ENCODE measurements at regions of chr17 and their contacts with region 1.

Region 1: DNA sequence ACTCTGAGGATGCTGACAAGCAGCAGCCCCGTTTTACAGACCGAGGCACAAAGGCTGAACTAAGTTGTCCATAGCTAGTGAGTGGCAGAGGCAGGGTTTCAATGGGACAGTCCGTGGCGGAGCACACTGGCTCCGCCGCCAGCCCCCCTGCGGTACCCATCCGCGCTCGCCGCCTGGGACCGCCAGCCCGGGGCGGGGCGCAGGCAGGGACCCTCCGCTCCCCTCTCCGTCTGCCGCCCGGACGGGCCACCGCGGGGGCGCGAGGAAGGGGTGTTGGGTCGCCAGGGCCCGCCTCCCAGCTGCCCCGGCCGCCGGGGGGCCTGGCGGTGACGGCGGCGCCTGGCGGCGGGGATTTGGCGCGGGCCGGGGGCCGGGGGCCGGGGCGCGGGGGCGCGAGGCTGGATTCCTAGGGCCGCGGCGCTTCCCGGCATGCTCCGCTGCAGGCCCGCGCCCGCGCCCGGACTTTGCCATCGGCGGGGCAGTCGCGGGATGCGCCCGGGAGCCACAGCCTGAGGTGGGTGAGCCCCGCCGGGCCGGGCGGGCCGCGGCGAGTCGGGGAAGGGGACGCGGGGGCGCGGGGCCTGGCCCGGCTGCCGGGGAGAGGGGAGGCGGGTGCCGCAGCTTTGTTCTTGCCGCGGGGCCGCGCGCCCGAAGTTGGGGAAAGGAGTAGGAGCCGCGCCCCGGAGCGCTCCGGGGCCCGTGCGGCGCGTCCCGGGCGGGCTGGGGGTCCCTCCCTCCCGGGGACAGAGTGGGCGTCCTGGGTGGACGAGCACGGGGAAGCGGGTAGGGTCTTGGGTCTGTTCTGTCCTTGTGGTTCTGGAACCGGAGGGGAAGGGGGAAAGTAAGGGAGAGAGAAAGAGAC is at the start of gene TMEM98:
- DNase-seq: peak in 9 of 10 donors; percentile 47 to 94 (median 59)

Region 2: DNA sequence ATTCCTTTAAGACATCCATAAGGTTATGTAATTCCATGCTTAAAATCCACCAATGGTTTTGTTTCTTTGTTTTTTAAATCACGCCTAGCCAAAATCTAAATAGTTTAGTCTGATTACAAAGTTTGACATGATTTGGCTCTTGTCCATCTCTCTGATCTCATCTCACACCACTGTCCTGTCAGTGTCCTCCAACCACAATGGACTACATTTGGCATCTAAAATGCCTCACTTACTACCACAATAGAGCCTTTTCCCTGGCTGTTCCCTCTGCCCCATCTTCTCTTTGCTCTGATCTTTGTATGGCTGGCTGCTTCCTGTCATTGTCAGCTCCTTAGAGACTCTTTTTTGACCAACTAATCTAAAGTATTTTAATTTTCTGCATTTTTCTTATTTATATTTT is 208.3 kb before region 1 on chr17:
- intact Hi-C with region 1: no loop called
- DNase-seq: no peak

Region 3: DNA sequence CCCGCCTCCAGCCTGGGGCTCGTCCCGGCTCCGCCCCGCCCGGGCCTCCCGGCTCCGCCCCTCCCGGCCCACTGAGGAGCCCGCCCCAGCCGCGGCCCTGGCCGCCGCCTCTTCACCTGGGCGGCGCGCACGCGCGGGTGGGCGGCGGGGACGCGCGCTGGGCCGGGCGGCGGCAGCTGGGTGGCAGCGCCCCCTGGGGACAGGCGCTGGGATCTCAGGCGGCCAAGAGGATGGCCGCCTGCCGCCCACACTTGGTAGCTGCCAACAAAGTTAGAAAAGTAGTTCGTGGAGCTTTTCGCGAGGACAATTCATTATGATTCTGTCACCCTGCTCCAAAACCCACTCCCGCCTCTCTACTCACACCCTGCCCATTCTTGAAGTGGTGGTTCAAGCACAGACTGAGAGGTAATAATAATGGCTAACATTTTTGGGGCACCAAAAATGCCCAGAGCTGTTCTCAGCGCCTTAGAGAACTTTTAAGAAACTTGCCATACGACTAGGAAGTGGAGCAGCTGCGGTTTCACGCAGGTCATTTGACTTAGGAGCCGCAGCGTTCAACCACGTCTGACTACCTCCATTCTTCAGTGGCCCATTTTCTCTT is 50.7 kb before region 1 on chr17:
- intact Hi-C with region 1: loop called (anchors 5 kb)
- DNase-seq: peak; percentile 73 to 98 (median 82)

Region 4: DNA sequence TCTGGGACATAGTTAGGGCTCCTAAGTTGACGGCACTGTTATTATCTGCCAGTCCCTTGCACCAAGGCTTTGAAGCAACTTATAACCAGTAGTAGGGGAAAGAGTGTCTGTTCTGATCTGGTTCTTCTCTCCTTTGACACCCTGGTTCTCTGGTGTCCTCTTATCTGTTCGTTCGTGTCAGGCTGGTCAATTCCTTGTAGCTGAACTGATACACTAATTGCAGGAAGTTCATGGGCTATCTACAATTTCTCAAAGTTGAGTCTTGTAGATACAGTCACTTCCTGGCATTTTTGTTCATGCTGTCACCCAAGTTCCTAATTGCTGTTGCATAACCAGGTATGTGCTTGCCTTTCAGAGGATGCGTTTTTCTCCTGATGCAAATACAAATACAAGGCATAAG is 33.7 kb before region 1 on chr17:
- intact Hi-C with region 1: no loop called
- DNase-seq: no peak